Dendritic cell treated with granulocyte-macrophage colony-stimulating factor and Interleukin-4, amounts not matched to agents 40 ng/mL and 50 ng/mL, for 4 days (primary cell): ENCODE measurements at regions of chr1 and their contacts with region 1.

Region 1: GRCh38 chr1:85894651-85895050 is 186.4 kb upstream of the ZNHIT6 start:
- H3K4me3 Mint-ChIP-seq: no peak overlapping the region
- H3K27ac Mint-ChIP-seq: no peak overlapping the region
- H3K4me1 Mint-ChIP-seq: no peaks in the 10 kb centered on the region
- H3K27me3 Mint-ChIP-seq: no peaks in the 10 kb centered on the region

Region 2: GRCh38 chr1:85952460-85952859 is 57.8 kb after region 1 on chr1:
- intact Hi-C with region 1: no loop called
- H3K4me3 Mint-ChIP-seq: no peak overlapping the region
- H3K27ac Mint-ChIP-seq: no peak overlapping the region
- H3K4me1 Mint-ChIP-seq: no peaks in the 10 kb centered on the region
- H3K27me3 Mint-ChIP-seq: no peaks in the 10 kb centered on the region

Region 3: DNA sequence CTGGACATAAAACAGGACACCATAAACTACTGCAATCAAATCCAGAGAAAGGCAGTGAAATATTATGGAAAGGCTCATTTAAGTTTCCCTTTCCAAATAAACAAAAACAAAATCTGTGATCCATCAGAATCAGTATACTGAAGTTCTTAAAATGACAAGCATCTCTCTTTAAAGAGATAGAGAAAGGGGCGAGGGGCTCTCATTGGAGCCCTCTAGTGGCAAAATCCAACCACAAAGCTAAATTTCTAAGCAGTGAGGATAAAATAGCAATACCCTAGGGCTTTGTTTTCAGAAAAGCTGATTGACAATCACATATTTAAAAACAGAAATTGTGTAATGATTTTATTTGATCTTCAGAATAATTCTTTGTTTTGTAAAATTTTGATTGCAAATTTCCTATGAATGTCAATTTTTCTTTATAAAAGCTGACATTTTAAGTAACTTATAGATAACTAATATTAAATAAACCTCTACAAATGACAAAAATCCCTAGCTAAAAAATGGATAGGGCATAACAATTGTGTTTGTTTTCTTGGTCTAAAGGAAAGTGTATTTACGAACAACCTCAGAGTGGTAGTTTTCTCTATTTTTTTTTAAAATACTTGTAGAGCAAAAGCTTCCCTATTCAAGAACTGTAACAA is 123.8 kb after region 1 on chr1:
- intact Hi-C with region 1: loop called (anchors 2 kb)
- H3K4me3 Mint-ChIP-seq: no peak overlapping the region
- H3K27ac Mint-ChIP-seq: no peak overlapping the region
- H3K4me1 Mint-ChIP-seq: no peaks in the 10 kb centered on the region
- H3K27me3 Mint-ChIP-seq: no peaks in the 10 kb centered on the region